H1 (cell line): ENCODE measurements at regions of chr7 and their contacts with region 1.

Region 1: GRCh38 chr7:65951837-65952578 is 30.0 kb downstream of the GUSB start:
- DNase-seq: no peak
- H3K4me3 ChIP-seq: no peak overlapping the region
- H3K27ac ChIP-seq: no peak overlapping the region
- H3K4me1 ChIP-seq: no peaks in the 10 kb centered on the region
- H3K27me3 ChIP-seq: no peaks in the 10 kb centered on the region
- CTCF ChIP-seq: no peak
- EP300 ChIP-seq: no peak
- POLR2A ChIP-seq: no peak
- RAD21 ChIP-seq: no peak

Region 2: DNA sequence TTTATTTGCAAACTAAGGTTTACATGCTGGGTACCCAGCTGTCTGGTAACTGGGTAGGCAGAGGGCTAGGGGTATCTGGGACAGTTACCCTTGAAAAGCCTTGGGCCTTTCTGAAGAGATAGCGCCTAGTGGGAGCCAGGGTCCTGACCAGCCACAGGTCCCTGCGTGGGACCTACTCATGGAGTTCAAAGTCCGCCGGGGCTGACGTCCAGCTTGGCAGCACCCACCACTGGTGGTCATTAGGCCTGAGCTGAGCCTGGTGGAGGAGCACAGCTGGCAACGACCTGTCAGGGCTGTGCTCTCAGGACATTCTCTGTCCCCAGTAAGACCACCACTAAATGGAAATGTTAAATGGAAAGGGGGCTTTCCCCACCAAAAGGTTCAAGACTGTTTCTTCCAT is 10.0 kb after region 1 on chr7:
- CTCF ChIA-PET with region 1: interaction called, 3 read pairs
- POLR2A ChIA-PET with region 1: interaction called, 13 read pairs
- DNase-seq: no peak
- H3K4me3 ChIP-seq: no peak overlapping the region
- H3K27ac ChIP-seq: no peak overlapping the region
- H3K4me1 ChIP-seq: no peaks in the 10 kb centered on the region
- H3K27me3 ChIP-seq: no peaks in the 10 kb centered on the region
- CTCF ChIP-seq: no peak
- EP300 ChIP-seq: no peak
- POLR2A ChIP-seq: no peak
- RAD21 ChIP-seq: no peak